ENCODE measurements at regions of chr17 and their contacts with region 1.

Region 1: DNA sequence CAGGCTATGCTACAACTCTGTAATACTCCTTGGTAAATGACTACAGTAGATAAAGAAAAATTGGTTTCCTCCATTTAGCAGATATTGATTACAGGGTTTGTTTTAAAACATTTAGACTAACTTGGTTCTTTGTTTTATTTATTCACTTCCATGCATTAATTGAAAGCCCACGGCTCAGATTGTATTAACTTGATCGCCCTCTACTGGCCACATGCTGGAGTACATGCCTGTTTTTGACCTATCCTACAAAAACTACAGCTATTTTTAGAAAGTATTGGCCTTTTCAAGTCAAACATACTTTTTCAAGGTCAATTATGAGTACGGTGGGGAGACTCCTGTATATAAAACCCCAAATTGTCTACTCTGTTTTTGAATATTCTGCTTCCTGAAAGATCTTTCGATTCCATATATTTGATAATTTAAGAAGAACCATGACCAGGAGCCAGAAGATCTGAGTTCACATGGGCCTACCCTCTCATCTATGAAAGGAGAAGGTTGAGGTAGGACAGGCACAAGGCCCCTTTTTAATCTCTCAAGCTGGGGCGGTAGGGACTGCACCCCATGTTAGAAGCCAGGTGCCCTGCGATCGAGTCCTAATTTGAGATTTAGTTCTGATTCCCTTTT is 51.8 kb downstream of the CA10 start:
- DNase-seq: peak in 1 of 2 experiments; percentile 70
- H3K4me3 ChIP-seq: no peak overlapping the region
- H3K27ac ChIP-seq: no peak overlapping the region
- H3K4me1 ChIP-seq: no peaks in the 10 kb centered on the region
- H3K27me3 ChIP-seq: no peaks in the 10 kb centered on the region
- CTCF ChIP-seq: peak in 2 of 3 experiments; percentile 66 to 73; a peak in 3 of 4 replicates
- EP300 ChIP-seq: no peak
- POLR2A ChIP-seq: no peak
- RAD21 ChIP-seq: peak; percentile 80 to 81

Region 2: GRCh38 chr17:51764387-51764972 is 342.3 kb before region 1 on chr17:
- CTCF ChIA-PET with region 1: interaction called, 74 read pairs
- POLR2A ChIA-PET with region 1: no interaction called
- DNase-seq: peak; percentile 61 to 68
- H3K4me3 ChIP-seq: no peak overlapping the region
- H3K27ac ChIP-seq: no peak overlapping the region
- H3K4me1 ChIP-seq: no peaks in the 10 kb centered on the region
- H3K27me3 ChIP-seq: no peaks in the 10 kb centered on the region
- CTCF ChIP-seq: peak; percentile 68 to 96 (median 88)
- EP300 ChIP-seq: no peak
- POLR2A ChIP-seq: no peak
- RAD21 ChIP-seq: peak; percentile 98 to 99

Region 3: GRCh38 chr17:51860954-51861561 is 245.7 kb before region 1 on chr17:
- CTCF ChIA-PET with region 1: interaction called, 22 read pairs
- POLR2A ChIA-PET with region 1: no interaction called
- DNase-seq: peak; percentile 43 to 81
- H3K4me3 ChIP-seq: no peak overlapping the region
- H3K27ac ChIP-seq: no peak overlapping the region
- H3K4me1 ChIP-seq: no peaks in the 10 kb centered on the region
- H3K27me3 ChIP-seq: no peaks in the 10 kb centered on the region
- CTCF ChIP-seq: peak; percentile 77 to 94 (median 88)
- EP300 ChIP-seq: no peak
- POLR2A ChIP-seq: no peak
- RAD21 ChIP-seq: peak; percentile 86 to 87

Region 4: DNA sequence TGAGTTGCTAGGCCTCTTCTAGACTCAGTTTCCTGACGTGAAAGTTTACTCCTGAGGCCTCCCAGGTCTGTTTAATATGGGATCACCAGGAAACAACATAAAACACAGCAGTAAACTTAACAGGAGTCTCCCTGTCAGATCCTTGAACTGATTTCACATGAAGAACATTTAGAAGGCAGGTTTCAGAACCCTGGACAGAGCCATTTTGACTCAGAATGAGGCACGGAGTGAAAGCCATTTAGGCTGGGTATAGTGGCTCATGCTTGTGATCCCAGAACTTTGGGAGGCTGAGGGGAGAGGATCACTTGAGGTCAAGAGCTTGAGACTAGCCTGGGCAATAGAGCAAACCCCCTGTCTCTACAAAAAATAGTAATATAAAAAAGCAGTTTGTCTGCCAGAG is 237.4 kb before region 1 on chr17:
- CTCF ChIA-PET with region 1: interaction called, 22 read pairs
- POLR2A ChIA-PET with region 1: no interaction called
- DNase-seq: peak in 1 of 2 experiments; percentile 61
- H3K4me3 ChIP-seq: no peak overlapping the region
- H3K27ac ChIP-seq: no peak overlapping the region
- H3K4me1 ChIP-seq: peaks cover 0 to 5% (median 1%) of the 10 kb centered on the region in 4 experiments; a peak in 2 of 7 replicates
- H3K27me3 ChIP-seq: no peaks in the 10 kb centered on the region; a peak in 1 of 7 replicates
- CTCF ChIP-seq: no peak
- EP300 ChIP-seq: no peak
- POLR2A ChIP-seq: no peak
- RAD21 ChIP-seq: no peak

Region 5: DNA sequence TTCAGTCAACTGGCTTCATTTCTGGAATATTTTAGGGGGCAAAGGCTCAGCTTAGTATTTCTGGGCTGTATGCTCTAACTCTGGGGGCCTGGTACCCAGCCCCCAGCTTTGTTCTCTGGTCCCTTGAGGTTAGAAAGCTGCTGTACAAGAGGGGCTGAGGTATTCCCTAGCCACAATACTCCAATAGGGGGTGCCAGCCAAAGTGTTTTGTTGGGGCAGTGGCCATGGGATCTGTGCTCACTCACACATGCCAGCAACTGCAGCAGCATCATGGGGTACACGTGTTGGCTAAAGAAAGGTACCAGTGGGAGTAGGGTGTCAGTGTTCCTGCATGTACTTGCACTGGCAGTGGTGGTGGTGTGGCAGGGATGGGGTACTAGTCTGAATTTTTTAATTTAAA is 205.5 kb before region 1 on chr17:
- CTCF ChIA-PET with region 1: interaction called, 10 read pairs
- POLR2A ChIA-PET with region 1: no interaction called
- DNase-seq: peak in 1 of 2 experiments; percentile 46
- H3K4me3 ChIP-seq: no peak overlapping the region
- H3K27ac ChIP-seq: no peak overlapping the region
- H3K4me1 ChIP-seq: no peaks in the 10 kb centered on the region
- H3K27me3 ChIP-seq: no peaks in the 10 kb centered on the region
- CTCF ChIP-seq: peak; percentile 39 to 59 (median 49)
- EP300 ChIP-seq: no peak
- POLR2A ChIP-seq: no peak
- RAD21 ChIP-seq: peak; percentile 56 to 61

Region 6: GRCh38 chr17:52136166-52136565 is 29.4 kb after region 1 on chr17:
- CTCF ChIA-PET with region 1: interaction called, 10 read pairs
- POLR2A ChIA-PET with region 1: no interaction called
- DNase-seq: no peak
- H3K4me3 ChIP-seq: no peak overlapping the region
- H3K27ac ChIP-seq: no peak overlapping the region
- H3K4me1 ChIP-seq: peaks cover 0 to 6% (median 2%) of the 10 kb centered on the region in 4 experiments; a peak in 3 of 7 replicates
- H3K27me3 ChIP-seq: no peaks in the 10 kb centered on the region
- CTCF ChIP-seq: no peak
- EP300 ChIP-seq: no peak
- POLR2A ChIP-seq: no peak
- RAD21 ChIP-seq: no peak

Measured in H1 (cell line).